ENCODE measurements at regions of chr4 and their contacts with region 1.

Region 1: GRCh38 chr4:153684182-153684970 is at the start of gene TLR2:
- H3K4me3 Mint-ChIP-seq: peak within 1 kb of the TSS; percentile 87
- H3K27ac Mint-ChIP-seq: peak within 1 kb of the TSS; percentile 86
- H3K4me1 Mint-ChIP-seq: peaks cover 30% of the 10 kb centered on the region
- H3K27me3 Mint-ChIP-seq: peaks cover 4% of the 10 kb centered on the region

Region 2: GRCh38 chr4:153620352-153620751 is 64.0 kb before region 1 on chr4:
- intact Hi-C with region 1: no loop called
- H3K4me3 Mint-ChIP-seq: no peak overlapping the region
- H3K27ac Mint-ChIP-seq: peak overlapping the region; percentile 34
- H3K4me1 Mint-ChIP-seq: peaks cover 46% of the 10 kb centered on the region
- H3K27me3 Mint-ChIP-seq: no peaks in the 10 kb centered on the region

Region 3: GRCh38 chr4:153649572-153649991 is 34.8 kb before region 1 on chr4:
- intact Hi-C with region 1: loop called (anchors 5 kb)
- H3K4me3 Mint-ChIP-seq: no peak overlapping the region
- H3K27ac Mint-ChIP-seq: no peak overlapping the region
- H3K4me1 Mint-ChIP-seq: peaks cover 44% of the 10 kb centered on the region
- H3K27me3 Mint-ChIP-seq: no peaks in the 10 kb centered on the region

Region 4: DNA sequence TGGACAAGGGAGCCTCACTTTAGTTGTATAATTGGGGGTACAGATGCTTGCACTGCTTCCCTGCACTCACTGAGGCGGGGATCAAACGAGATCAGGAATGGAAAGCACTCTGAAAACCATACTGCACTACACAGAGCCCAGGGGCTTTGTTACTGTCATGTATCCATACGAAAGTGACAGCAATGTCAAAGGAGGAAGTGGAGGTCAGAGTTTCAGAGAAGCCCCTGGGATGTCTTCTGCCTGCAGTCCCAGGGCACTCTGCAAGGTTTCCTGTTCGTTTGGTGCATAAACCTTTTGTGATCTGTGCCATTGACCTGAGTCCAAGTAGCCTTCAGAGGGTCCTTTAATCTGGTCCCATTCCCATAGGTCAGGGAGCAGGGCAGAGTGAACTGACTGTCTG is 44.3 kb after region 1 on chr4:
- intact Hi-C with region 1: loop called (anchors 5 kb)
- H3K4me3 Mint-ChIP-seq: no peak overlapping the region
- H3K27ac Mint-ChIP-seq: peak overlapping the region; percentile 80
- H3K4me1 Mint-ChIP-seq: peaks cover 68% of the 10 kb centered on the region
- H3K27me3 Mint-ChIP-seq: no peaks in the 10 kb centered on the region

Region 5: DNA sequence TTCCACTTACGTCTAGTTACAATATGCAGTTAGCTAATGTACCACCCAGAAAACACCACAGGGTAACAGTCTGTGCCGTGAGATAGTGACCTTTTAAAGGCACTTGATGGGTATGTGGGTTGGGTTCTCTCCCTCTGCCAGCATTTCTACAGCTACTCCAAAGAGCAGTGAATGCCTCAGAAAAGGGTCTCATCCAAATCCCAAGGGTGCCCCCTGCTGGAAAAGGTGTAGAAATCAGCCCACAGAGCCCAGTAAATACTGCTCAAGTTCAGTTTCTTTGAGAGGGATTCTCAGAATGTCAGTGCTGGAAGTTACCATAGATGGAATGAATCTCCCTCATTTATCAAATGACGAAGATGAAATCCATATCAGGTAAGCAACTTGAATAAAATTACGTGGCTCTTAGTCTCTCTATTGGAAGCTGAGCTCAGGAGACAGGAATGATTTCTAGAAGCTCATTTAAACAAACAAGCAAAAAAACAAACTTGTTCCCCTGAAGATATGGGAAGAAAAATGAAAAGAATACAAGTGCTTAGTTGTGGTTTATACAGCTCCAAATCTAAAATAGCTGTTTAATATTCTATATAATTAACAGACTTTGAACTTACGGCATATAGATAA is 65.9 kb after region 1 on chr4:
- intact Hi-C with region 1: loop called (anchors 5 kb)
- H3K4me3 Mint-ChIP-seq: no peak overlapping the region
- H3K27ac Mint-ChIP-seq: no peak overlapping the region
- H3K4me1 Mint-ChIP-seq: peaks cover 35% of the 10 kb centered on the region
- H3K27me3 Mint-ChIP-seq: no peaks in the 10 kb centered on the region

Region 6: DNA sequence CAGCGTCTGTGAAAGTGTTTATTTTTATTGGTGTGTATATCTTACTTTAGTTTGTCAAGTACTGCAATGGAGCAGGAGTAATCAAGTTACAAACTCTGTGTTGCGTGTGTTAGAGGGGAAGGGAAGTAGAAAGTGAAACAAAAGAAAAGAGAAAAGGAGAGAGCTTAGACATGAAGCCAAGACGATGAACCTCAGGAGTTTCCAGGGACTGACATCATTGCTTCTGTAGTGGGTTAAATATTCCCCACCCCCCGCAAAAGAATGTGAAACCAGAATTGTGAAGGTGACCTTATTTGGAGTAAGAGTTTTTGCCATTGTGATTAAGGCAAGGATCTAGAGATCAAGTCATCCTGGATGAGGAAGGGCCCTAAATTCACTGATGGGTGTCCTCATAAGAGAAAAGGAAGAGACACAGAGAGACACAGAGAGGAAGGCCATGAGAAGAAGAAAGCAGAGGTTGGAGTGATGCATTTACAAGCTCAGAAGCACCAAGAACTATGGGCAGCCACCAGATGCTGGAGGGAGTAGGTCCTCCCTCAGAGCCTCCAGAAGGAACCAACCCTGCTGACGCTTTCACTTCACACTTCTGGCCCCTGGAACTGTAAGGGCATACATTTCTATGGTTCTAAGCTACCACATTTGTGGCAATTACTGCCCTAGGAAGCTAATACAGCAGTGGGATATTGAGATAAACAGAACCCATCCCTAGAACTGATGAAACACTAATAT is 278.1 kb after region 1 on chr4:
- intact Hi-C with region 1: no loop called
- H3K4me3 Mint-ChIP-seq: no peak overlapping the region
- H3K27ac Mint-ChIP-seq: no peak overlapping the region
- H3K4me1 Mint-ChIP-seq: no peaks in the 10 kb centered on the region
- H3K27me3 Mint-ChIP-seq: peaks cover 1% of the 10 kb centered on the region

Measured in dendritic cell treated with granulocyte-macrophage colony-stimulating factor and Interleukin-4, amounts not matched to agents 40 ng/mL and 50 ng/mL, for 4 days (primary cell).